ENCODE measurements at regions of chr2 and their contacts with region 1.

Region 1: GRCh38 chr2:148509288-148509902 is 135.2 kb upstream of the EPC2 start:
- DNase-seq: peak; percentile 77
- H3K4me3 ChIP-seq: peak overlapping the region; percentile 43 to 53; a peak in 3 of 4 replicates
- H3K27ac ChIP-seq: no peak overlapping the region
- H3K4me1 ChIP-seq: peaks cover 0 to 6% of the 10 kb centered on the region in 2 experiments; a peak in 2 of 4 replicates
- H3K27me3 ChIP-seq: no peaks in the 10 kb centered on the region
- CTCF ChIP-seq: peak; percentile 93
- EP300 ChIP-seq: no peak
- RAD21 ChIP-seq: peak; percentile 96

Region 2: DNA sequence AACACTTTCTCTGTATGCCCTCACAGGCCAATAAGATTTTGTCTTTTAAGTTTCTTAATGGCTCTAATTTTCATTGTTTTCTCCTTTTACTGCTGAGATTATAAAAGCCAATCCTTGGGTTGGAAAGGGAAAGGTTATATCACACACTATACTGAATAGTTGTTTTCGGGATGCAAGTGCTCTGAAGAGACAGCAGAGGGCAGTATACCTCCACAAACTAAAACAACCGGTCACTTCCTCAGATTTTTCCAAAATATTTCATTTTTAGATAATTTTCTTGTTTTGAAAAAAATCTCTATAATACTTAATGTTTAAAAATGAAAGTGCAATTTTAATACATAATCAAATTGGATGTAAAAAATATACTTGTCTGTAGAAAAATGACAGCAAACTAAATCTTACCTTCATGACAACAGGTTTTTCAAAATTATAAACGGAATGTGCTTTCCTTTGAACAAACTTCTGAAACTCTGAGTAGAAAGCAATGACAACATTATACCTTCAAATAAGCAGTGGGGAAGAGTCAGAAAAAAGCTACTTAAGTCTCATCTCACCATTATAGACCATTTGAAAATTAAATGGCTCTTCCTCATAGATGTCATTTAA is 571.5 kb before region 1 on chr2:
- CTCF ChIA-PET with region 1: interaction called, 15 read pairs
- POLR2A ChIA-PET with region 1: no interaction called
- DNase-seq: peak; percentile 16
- H3K4me3 ChIP-seq: no peak overlapping the region; a peak in 1 of 4 replicates
- H3K27ac ChIP-seq: no peak overlapping the region
- H3K4me1 ChIP-seq: no peaks in the 10 kb centered on the region
- H3K27me3 ChIP-seq: no peaks in the 10 kb centered on the region
- CTCF ChIP-seq: peak; percentile 93
- EP300 ChIP-seq: no peak
- RAD21 ChIP-seq: peak; percentile 84

Region 3: DNA sequence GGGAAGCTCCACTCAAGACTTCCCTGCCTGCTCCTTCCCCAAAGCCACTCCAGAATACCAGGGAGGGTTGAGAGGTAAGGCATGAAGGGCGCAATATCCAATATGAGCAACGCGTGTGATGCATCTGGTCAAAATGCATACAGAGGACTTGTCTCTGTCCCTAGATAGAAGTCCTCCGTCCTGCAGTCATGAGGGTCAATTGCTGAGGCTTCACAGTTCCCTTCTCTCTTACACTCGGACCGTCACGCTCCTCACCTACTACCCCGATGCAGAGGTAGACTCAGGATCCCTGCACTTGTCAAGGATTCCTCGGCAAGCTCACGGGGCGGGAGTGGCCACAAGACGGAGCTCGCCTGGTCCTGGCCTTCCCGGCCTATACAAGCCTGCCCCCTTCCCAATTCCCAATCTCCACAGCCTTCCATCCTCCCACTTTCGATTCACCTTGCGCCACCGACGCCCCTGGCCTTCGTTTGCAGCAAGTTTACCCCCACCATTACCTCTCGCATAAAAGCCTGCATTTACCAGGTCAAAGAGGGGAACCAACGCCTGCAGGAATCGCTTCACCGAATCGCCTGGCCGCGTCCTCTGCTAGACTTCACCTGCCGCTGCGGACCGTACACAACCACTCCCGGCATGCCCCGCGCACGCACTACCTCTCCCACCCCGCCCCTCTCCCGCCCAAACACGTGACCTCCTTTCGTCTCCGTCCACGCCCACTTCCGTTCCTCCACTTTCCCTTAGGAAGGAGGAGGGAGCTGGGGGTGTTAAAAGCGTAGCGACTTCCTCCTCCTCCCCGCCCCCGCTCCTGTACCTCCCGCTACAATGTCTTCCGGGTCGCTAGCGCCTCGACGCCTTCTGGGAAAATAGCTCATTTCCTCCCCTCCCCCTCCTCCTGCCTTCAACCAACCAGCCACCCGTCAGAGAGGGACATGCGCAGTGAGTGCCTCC is 489.0 kb before region 1 on chr2 and contains the start of gene ORC4:
- CTCF ChIA-PET with region 1: interaction called, 23 read pairs
- POLR2A ChIA-PET with region 1: interaction called, 6 read pairs
- DNase-seq: peak; percentile 84
- H3K4me3 ChIP-seq: peak within 1 kb of the TSS; percentile 86 to 94
- H3K27ac ChIP-seq: peak within 1 kb of the TSS; percentile 90 to 91
- H3K4me1 ChIP-seq: peaks cover 6 to 14% of the 10 kb centered on the region in 2 experiments; a peak in 2 of 4 replicates
- H3K27me3 ChIP-seq: no peaks in the 10 kb centered on the region
- CTCF ChIP-seq: peak; percentile 60
- EP300 ChIP-seq: peak in 1 of 2 experiments; percentile 50; a peak in 2 of 4 replicates
- RAD21 ChIP-seq: peak; percentile 49
- polyA plus RNA-seq, gene ORC4: 15.2 and 22.0 TPM in 2 replicates

Region 4: DNA sequence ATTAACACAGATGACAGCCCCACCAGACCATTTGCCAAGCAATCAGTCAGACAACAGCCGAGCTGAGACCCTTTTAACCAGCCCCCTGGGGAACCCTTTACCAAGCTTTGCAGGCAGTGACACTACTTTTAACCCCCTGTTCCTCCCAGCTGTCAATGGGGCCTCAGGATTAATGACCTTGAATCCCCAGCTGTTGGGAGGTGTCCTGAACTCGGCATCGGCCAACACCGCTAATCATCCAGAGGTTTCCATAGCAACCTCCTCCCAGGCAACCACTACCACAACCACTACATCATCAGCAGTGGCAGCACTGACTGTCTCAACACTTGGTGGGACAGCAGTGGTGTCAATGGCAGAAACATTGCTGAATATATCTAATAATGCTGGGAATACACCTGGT is 25.7 kb before region 1 on chr2:
- CTCF ChIA-PET with region 1: interaction called, 15 read pairs
- POLR2A ChIA-PET with region 1: no interaction called
- DNase-seq: no peak
- H3K4me3 ChIP-seq: no peak overlapping the region
- H3K27ac ChIP-seq: no peak overlapping the region
- H3K4me1 ChIP-seq: no peaks in the 10 kb centered on the region
- H3K27me3 ChIP-seq: no peaks in the 10 kb centered on the region
- CTCF ChIP-seq: no peak
- EP300 ChIP-seq: no peak
- RAD21 ChIP-seq: no peak

Region 5: DNA sequence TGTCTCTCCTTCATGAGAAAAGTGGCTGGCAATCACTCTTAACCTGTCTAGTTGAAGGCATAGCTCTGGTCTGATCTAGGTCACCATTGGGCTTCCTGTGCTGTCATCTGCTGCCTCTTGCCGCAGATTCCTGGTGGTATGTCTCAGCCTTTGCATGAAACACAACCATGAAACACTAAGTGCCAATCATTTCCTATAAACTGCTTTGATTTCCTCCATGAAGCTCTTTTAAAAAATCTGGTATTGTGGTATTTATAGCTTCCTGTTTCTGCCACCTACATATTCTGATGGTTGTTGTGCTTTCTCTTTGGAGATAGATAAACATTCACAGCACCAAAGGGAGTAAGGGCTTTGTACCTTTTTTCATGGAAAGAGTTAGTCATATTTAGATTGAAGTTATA is 15.1 kb after region 1 on chr2:
- CTCF ChIA-PET with region 1: interaction called, 36 read pairs
- POLR2A ChIA-PET with region 1: no interaction called
- DNase-seq: no peak
- H3K4me3 ChIP-seq: no peak overlapping the region
- H3K27ac ChIP-seq: no peak overlapping the region
- H3K4me1 ChIP-seq: no peaks in the 10 kb centered on the region
- H3K27me3 ChIP-seq: no peaks in the 10 kb centered on the region
- CTCF ChIP-seq: no peak
- EP300 ChIP-seq: no peak
- RAD21 ChIP-seq: no peak

Region 6: GRCh38 chr2:148603562-148603920 is 94.1 kb after region 1 on chr2:
- CTCF ChIA-PET with region 1: no interaction called
- POLR2A ChIA-PET with region 1: no interaction called
- DNase-seq: no peak
- H3K4me3 ChIP-seq: no peak overlapping the region
- H3K27ac ChIP-seq: no peak overlapping the region
- H3K4me1 ChIP-seq: no peaks in the 10 kb centered on the region
- H3K27me3 ChIP-seq: no peaks in the 10 kb centered on the region; the same call in 1 of the 2 replicates
- CTCF ChIP-seq: no peak
- EP300 ChIP-seq: no peak
- RAD21 ChIP-seq: no peak

Region 7: DNA sequence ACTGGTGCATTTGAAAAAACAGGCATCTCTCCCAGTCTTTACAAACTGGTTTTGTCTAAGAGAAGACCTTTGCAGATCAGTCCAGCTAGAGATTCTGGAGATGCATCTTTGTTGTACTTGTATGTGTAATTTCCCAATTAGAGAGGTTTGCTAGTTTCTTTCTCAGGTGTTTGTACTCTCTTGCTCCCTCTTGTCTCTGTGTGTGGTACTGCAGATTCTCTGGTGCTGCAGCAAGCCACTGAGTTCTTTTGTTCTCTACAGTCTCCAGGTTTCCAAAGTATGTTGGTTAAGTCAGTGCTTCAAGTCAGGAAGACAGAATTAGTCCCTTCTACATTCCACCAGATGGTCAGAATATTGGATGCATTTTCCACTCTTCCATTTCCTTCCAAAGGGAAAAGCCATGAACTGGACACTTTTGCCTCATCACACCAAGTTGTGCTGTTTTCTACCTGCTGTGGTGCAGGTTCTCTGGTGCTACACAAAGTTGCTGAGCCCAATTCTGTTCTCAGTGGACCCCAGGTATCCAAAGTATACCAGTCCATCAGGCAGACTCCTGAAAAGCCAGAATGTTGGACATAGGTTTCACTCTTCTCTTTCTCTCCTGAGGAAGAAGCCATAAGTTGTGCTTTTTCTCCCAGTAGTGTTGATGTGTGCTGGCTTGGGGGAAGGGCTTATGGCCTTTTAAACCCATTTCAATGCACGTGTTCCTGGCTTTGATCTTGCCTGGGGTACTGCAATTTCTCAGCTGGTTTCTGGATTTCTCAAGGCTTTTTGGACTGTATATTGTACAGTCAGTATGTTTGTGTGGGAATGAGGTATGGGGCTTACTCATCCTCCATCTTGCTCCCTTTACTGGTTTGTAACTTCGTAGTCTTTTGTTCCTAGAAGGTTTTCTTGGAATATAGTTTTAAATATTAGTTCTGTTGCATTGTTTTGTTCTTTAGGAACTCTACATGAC is 164.9 kb after region 1 on chr2:
- CTCF ChIA-PET with region 1: no interaction called
- POLR2A ChIA-PET with region 1: no interaction called
- DNase-seq: peak; percentile 27
- H3K4me3 ChIP-seq: no peak overlapping the region
- H3K27ac ChIP-seq: no peak overlapping the region
- H3K4me1 ChIP-seq: peaks cover 0 to 6% of the 10 kb centered on the region in 2 experiments; a peak in 2 of 4 replicates
- H3K27me3 ChIP-seq: no peaks in the 10 kb centered on the region
- CTCF ChIP-seq: peak; percentile 59
- EP300 ChIP-seq: no peak
- RAD21 ChIP-seq: peak; percentile 24; the same call in 1 of the 2 replicates

Measured in SK-N-SH (cell line).